CD14-positive monocyte (primary cell): ENCODE measurements at regions of chr1 and their contacts with region 1.

Region 1: GRCh38 chr1:39446986-39447567 is 44.4 kb upstream of the BMP8A start:
- DNase-seq: no peak
- H3K4me3 ChIP-seq: no peak overlapping the region
- H3K4me3 Mint-ChIP-seq: no peak overlapping the region
- H3K27ac ChIP-seq: no peak overlapping the region
- H3K27ac Mint-ChIP-seq: no peak overlapping the region
- H3K4me1 ChIP-seq: no peaks in the 10 kb centered on the region
- H3K4me1 Mint-ChIP-seq: no peaks in the 10 kb centered on the region
- H3K27me3 ChIP-seq: no peaks in the 10 kb centered on the region
- H3K27me3 Mint-ChIP-seq: no peaks in the 10 kb centered on the region
- CTCF ChIP-seq: no peak

Region 2: GRCh38 chr1:39317910-39318633 is 129.0 kb before region 1 on chr1:
- intact Hi-C with region 1: loop called in 1 of 2 experiments (anchors 10 kb)
- DNase-seq: no peak
- H3K4me3 ChIP-seq: no peak overlapping the region
- H3K4me3 Mint-ChIP-seq: no peak overlapping the region
- H3K27ac ChIP-seq: peak overlapping the region in 1 of 2 donors; percentile 32
- H3K27ac Mint-ChIP-seq: peak overlapping the region in 2 of 7 donors; percentile 13 to 18
- H3K4me1 ChIP-seq: no peaks in the 10 kb centered on the region
- H3K4me1 Mint-ChIP-seq: no peaks in the 10 kb centered on the region
- H3K27me3 ChIP-seq: no peaks in the 10 kb centered on the region
- H3K27me3 Mint-ChIP-seq: peaks cover 0 to 1% (median 0%) of the 10 kb centered on the region in 3 donors
- CTCF ChIP-seq: no peak

Region 3: GRCh38 chr1:39776400-39776713 is 329.3 kb after region 1 on chr1:
- intact Hi-C with region 1: no loop called
- DNase-seq: no peak
- H3K4me3 ChIP-seq: no peak overlapping the region
- H3K4me3 Mint-ChIP-seq: peak overlapping the region in 1 of 2 donors; percentile 1
- H3K27ac ChIP-seq: no peak overlapping the region
- H3K27ac Mint-ChIP-seq: peak overlapping the region in 1 of 7 donors; percentile 65
- H3K4me1 ChIP-seq: peaks cover 4 to 12% of the 10 kb centered on the region in 2 donors
- H3K4me1 Mint-ChIP-seq: peaks cover 14% of the 10 kb centered on the region
- H3K27me3 ChIP-seq: no peaks in the 10 kb centered on the region
- H3K27me3 Mint-ChIP-seq: peaks cover 0 to 8% (median 3%) of the 10 kb centered on the region in 3 donors
- CTCF ChIP-seq: no peak